ENCODE measurements at regions of chr2 and their contacts with region 1.

Region 1: GRCh38 chr2:97663965-97664635 is at the start of gene ACTR1B:
- DNase-seq: peak; percentile 96

Region 2: DNA sequence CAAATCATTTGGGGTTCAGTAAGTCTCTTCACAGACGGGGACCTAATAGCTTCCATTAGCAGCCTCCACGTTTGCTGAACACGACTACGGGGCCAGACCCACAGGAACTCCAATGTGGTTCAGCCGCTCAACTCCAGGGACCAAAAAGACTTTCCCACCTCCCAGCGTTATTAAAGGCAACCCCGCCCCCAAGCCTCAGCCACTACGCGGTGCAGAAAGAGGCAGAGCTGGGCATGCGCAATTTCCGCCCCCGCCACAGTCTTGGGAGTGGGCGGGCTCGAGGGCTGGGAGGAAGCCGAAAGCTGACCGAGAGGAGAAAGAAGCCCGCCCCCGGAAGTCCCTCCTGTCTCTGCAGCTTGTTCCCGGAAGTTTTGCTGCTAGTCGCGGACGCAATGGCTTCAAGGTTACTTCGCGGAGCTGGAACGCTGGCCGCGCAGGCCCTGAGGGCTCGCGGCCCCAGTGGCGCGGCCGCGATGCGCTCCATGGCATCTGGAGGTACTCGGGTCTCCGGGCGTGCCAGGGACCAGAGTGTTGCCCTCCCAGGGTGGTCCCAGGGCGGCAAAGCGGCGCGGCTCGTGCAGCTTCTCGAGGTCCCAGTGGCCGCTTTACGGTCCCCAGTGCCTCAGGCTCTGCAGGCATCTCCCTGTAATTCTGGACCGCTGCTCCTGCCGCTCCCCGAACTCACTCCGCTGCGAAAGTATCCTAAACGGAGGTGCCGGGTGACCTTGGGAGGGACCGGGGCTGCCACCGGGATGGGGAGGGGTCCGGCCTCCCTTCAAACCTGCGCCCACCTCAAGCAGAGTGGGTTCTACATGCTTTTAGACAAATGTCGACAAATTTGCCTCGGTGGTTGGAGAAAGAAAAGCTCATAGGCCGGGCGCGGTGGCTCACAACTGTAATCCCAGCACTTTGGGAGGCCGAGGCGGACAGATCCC is 18.1 kb before region 1 on chr2 and contains the start of gene COX5B:
- CTCF ChIA-PET with region 1: interaction called, 6 read pairs
- POLR2A ChIA-PET with region 1: interaction called, 164 read pairs
- DNase-seq: peak; percentile 99

Region 3: DNA sequence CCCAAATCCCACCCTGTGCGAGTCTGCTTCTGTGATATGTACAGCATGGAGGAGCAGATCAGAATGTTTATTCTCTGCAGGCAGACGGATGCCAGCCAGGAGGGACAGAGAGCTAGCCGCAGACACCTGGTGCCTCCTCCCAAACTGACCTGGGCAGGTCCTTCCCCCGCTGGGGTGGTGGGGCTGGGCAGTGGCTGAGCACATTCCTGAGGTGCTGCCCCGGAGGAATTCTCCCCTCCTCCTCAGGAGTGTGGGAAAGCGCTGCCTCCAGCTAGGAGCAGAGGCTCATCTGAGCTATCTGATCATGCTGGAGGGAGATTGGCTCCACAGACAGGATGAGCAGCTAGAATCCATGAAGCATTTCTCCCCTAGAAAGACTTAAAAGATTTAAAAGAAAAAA is 27.1 kb after region 1 on chr2:
- CTCF ChIA-PET with region 1: no interaction called
- POLR2A ChIA-PET with region 1: interaction called, 18 read pairs
- DNase-seq: no peak

Region 4: GRCh38 chr2:97697252-97698235 is 33.4 kb after region 1 on chr2:
- CTCF ChIA-PET with region 1: interaction called, 11 read pairs
- POLR2A ChIA-PET with region 1: interaction called, 18 read pairs
- DNase-seq: peak; percentile 84

Region 5: DNA sequence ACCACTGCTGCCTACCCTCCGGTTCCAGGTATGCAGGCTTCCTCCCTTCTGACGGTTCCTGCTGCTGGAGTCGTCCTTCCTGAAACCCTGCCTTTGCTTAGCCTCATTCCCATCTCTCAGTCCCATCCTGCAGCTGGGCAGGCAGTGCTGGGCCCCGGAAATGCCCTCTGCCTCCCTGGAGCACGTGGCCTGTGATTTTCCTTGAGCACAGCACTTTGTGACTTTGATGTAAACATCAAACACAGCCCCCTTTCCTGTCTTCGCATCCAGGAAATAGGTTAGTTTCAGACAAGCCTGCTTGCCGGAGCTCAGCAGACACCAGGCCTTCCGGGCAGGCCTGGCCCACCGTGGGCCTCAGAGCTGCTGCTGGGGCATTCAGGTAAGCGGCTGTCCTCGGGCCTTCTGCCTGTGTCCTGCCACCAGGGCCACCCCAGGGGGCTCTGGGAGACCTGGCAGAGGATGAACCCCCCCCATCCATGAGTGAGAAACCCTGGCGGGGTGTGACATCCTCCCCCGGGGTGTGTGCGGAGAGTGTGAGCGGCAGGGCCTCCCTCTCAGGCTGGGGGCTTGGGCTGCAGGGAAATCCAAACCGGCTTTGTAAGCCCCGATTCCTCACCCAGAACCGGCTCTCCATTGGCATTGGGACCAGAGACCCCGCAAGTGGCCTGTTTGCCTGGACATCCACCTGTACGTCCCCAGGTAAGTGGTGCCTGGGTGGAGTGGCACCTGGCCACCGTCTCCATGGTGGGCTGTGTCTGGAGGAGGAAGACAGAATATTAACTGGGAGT is 49.4 kb after region 1 on chr2 and contains the start of gene ZAP70:
- CTCF ChIA-PET with region 1: no interaction called
- POLR2A ChIA-PET with region 1: no interaction called
- DNase-seq: no peak

Measured in HEK293T (cell line).